ENCODE measurements at regions of chr2 and their contacts with region 1.

Region 1: GRCh38 chr2:163191372-163191771 is 352.8 kb upstream of the KCNH7 start:
- DNase-seq: peak; percentile 64
- H3K4me3 Mint-ChIP-seq: no peak overlapping the region
- H3K27ac Mint-ChIP-seq: no peak overlapping the region
- H3K4me1 Mint-ChIP-seq: peaks cover 8% of the 10 kb centered on the region
- H3K27me3 Mint-ChIP-seq: no peaks in the 10 kb centered on the region
- CTCF ChIP-seq: peak; percentile 78

Region 2: GRCh38 chr2:163266772-163267171 is 75.4 kb after region 1 on chr2:
- CTCF ChIA-PET with region 1: interaction called, 6 read pairs
- POLR2A ChIA-PET with region 1: no interaction called
- intact Hi-C with region 1: loop called (anchors 5 kb)
- DNase-seq: peak; percentile 97
- H3K4me3 Mint-ChIP-seq: no peak overlapping the region
- H3K27ac Mint-ChIP-seq: no peak overlapping the region
- H3K4me1 Mint-ChIP-seq: peaks cover 13% of the 10 kb centered on the region
- H3K27me3 Mint-ChIP-seq: no peaks in the 10 kb centered on the region
- CTCF ChIP-seq: no peak

Region 3: DNA sequence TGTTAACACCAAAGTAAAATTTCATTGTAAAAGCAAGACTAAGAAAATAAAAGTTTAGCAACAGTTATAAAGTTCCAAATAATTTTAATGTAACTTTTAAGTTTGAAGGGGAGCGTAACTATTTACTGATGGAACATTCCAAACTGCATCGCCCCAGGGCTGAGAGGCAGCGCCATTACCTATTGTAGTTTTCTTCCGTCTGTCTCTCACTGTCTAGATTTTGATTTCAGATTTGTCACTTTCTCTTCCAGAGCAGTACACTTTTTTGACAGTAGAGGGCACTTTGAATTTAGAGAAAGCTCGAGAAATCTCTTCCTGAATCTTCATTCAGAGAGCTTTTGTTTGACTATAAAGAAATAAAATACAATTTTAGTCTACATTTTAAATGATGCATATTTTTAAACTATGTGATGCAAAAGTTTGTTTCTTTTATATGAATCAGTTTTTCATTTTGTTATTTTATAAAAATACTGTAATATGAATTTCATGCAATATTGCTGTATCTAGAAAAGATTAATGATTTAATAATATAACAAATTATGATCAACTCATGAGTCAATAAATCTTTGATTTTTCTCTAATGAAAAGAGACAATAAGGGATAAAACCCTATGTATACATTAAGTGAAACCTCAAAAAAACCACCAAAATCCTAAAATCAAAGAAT is 154.7 kb after region 1 on chr2:
- CTCF ChIA-PET with region 1: interaction called, 3 read pairs
- POLR2A ChIA-PET with region 1: no interaction called
- intact Hi-C with region 1: loop called (anchors 1 kb)
- DNase-seq: peak; percentile 75
- H3K4me3 Mint-ChIP-seq: no peak overlapping the region
- H3K27ac Mint-ChIP-seq: no peak overlapping the region
- H3K4me1 Mint-ChIP-seq: peaks cover 17% of the 10 kb centered on the region
- H3K27me3 Mint-ChIP-seq: no peaks in the 10 kb centered on the region
- CTCF ChIP-seq: peak; percentile 48

Region 4: DNA sequence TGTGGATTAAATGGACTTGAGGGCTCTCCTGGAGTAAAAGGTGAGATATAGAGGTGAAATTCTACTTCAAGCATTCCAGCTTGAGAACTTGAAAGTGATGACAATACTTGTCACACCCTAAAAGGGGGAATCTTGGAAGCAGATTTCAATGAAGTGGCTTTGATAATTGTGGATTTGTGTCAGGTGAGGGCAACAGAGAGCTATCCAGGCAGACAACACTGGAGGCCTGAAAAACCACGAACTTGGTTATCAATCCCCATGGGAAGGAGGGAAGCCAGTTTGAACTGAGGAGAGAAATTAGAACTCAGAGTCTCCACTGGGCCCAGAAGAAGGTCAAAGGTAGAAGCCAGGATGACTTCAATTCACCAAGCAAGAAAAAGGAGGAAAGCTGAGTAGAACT is 280.6 kb after region 1 on chr2:
- CTCF ChIA-PET with region 1: interaction called, 7 read pairs
- POLR2A ChIA-PET with region 1: interaction called, 3 read pairs
- intact Hi-C with region 1: loop called (anchors 1 kb)
- DNase-seq: peak; percentile 29
- H3K4me3 Mint-ChIP-seq: no peak overlapping the region
- H3K27ac Mint-ChIP-seq: no peak overlapping the region
- H3K4me1 Mint-ChIP-seq: peaks cover 6% of the 10 kb centered on the region
- H3K27me3 Mint-ChIP-seq: no peaks in the 10 kb centered on the region
- CTCF ChIP-seq: peak; percentile 60

Region 5: GRCh38 chr2:163667064-163667887 is 475.9 kb after region 1 on chr2:
- CTCF ChIA-PET with region 1: no interaction called
- POLR2A ChIA-PET with region 1: no interaction called
- intact Hi-C with region 1: loop called (anchors 10 kb)
- DNase-seq: peak; percentile 89
- H3K4me3 Mint-ChIP-seq: peak overlapping the region; percentile 15
- H3K27ac Mint-ChIP-seq: peak overlapping the region; percentile 95
- H3K4me1 Mint-ChIP-seq: peaks cover 52% of the 10 kb centered on the region
- H3K27me3 Mint-ChIP-seq: no peaks in the 10 kb centered on the region
- CTCF ChIP-seq: no peak

Region 6: GRCh38 chr2:163682692-163683091 is 491.3 kb after region 1 on chr2:
- CTCF ChIA-PET with region 1: no interaction called
- POLR2A ChIA-PET with region 1: no interaction called
- intact Hi-C with region 1: loop called (anchors 1 kb)
- DNase-seq: peak; percentile 74
- H3K4me3 Mint-ChIP-seq: peak overlapping the region; percentile 17
- H3K27ac Mint-ChIP-seq: peak overlapping the region; percentile 76
- H3K4me1 Mint-ChIP-seq: peaks cover 20% of the 10 kb centered on the region
- H3K27me3 Mint-ChIP-seq: no peaks in the 10 kb centered on the region
- CTCF ChIP-seq: no peak

Region 7: DNA sequence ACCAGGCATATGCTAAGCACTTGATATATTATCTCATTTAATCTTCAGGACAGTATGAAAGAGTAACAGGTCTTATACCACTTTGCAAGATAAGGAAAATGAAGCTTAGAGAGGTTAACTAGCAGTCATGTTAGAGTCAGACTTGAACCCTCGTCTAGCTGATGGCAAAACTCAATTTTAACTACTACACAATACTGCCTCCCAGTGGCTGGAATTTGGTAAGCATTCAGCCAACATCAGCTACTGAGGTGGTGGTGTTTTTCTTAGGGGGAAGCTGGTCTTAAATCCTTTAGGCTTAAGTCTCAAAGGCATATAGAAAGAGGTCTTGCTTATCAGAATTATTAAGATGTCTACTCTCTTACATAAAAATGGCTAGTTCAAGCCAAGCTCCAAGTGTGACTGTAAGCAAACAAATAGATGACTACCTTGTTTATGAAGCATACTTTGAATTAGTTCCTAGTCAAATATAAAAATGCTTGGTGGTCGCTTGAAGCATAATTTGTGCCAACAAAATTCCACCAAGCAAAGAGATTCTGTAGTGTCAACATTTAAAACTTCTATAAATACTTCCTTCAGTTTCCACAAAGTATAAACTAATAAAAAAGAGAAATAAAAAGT is 869.9 kb after region 1 on chr2:
- CTCF ChIA-PET with region 1: interaction called, 8 read pairs
- POLR2A ChIA-PET with region 1: no interaction called
- intact Hi-C with region 1: loop called (anchors 1 kb)
- DNase-seq: peak; percentile 58
- H3K4me3 Mint-ChIP-seq: no peak overlapping the region
- H3K27ac Mint-ChIP-seq: no peak overlapping the region
- H3K4me1 Mint-ChIP-seq: no peaks in the 10 kb centered on the region
- H3K27me3 Mint-ChIP-seq: no peaks in the 10 kb centered on the region
- CTCF ChIP-seq: peak; percentile 80

Measured in MCF 10A (cell line).